Activated CD8-positive, alpha-beta T cell treated with anti-CD3 and anti-CD28 coated beads, Interleukin-2, amount 10 ng/mL, durations not matched to agents 7 days and 5 days (primary cell): ENCODE measurements at regions of chr1 and their contacts with region 1.

Region 1: DNA sequence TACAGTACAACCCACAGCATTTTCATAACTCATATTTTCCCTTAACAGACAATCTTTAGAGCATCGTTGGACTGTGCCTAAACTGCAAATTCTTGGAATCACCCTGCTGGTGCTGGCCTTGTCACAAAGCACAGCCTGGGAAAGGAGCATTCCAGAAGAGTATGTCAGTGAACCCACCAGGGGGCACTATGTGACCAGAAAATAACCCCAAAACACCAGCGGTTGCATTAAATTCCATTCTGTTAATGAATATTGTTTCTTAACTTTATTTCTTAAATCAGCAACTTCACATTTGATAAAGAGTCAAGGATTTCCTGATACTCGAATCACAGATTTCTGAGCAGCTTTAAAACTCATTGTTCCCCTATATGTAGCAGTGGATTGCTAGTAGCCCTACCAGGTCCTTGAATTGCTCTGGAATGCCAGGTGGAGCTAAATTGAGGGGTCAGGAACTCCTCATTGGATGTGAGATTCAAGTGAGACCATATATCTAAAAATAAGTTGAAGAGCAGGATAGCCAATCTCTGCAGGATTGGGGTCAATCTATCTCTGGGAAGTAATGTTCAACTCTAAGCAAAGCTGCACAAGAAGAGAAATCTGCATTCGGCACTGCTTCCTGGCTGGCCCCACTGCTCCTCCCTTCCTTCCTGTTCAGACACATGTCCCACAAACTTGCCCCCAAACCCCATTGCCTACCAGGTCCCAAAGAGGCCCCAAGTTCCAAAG is 12.7 kb upstream of the RAB4A start:
- DNase-seq: peak; percentile 74
- ATAC-seq: peak; percentile 54
- H3K4me3 Mint-ChIP-seq: peak overlapping the region; percentile 56
- H3K27ac Mint-ChIP-seq: peak overlapping the region; percentile 73
- H3K4me1 Mint-ChIP-seq: peaks cover 35% of the 10 kb centered on the region
- H3K27me3 Mint-ChIP-seq: peaks cover 2% of the 10 kb centered on the region

Region 2: DNA sequence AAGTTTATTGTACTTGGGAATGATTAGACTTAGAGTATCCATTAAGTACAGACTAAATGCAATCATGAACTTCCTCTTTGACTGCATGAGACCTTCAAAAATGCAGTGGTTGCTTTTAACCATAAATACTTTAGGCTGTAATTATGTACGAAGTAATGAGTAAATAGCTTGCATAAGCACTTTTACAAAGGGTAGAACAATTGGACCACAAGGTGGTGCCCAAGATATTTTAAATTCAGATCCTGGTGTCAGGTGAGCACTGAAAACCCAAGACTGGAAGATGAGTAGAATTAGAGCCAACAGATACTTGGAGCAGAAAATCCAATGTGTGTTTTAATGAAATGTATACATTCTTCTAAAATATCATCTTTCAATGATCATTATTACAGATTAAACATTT is 566.3 kb before region 1 on chr1:
- CTCF ChIA-PET with region 1: interaction called, 13 read pairs
- POLR2A ChIA-PET with region 1: no interaction called
- DNase-seq: peak; percentile 51
- ATAC-seq: no peak
- H3K4me3 Mint-ChIP-seq: no peak overlapping the region
- H3K27ac Mint-ChIP-seq: no peak overlapping the region
- H3K4me1 Mint-ChIP-seq: peaks cover 10% of the 10 kb centered on the region
- H3K27me3 Mint-ChIP-seq: peaks cover 30% of the 10 kb centered on the region

Region 3: GRCh38 chr1:229227298-229227919 is 30.8 kb before region 1 on chr1:
- CTCF ChIA-PET with region 1: interaction called, 81 read pairs
- POLR2A ChIA-PET with region 1: interaction called, 3 read pairs
- DNase-seq: peak; percentile 86
- ATAC-seq: peak; percentile 80
- H3K4me3 Mint-ChIP-seq: no peak overlapping the region
- H3K27ac Mint-ChIP-seq: no peak overlapping the region
- H3K4me1 Mint-ChIP-seq: peaks cover 10% of the 10 kb centered on the region
- H3K27me3 Mint-ChIP-seq: peaks cover 10% of the 10 kb centered on the region

Region 4: GRCh38 chr1:229452956-229453801 is 195.0 kb after region 1 on chr1:
- CTCF ChIA-PET with region 1: interaction called, 12 read pairs
- POLR2A ChIA-PET with region 1: no interaction called
- DNase-seq: no peak
- ATAC-seq: no peak
- H3K4me3 Mint-ChIP-seq: no peak overlapping the region
- H3K27ac Mint-ChIP-seq: no peak overlapping the region
- H3K4me1 Mint-ChIP-seq: peaks cover 7% of the 10 kb centered on the region
- H3K27me3 Mint-ChIP-seq: no peaks in the 10 kb centered on the region

Region 5: DNA sequence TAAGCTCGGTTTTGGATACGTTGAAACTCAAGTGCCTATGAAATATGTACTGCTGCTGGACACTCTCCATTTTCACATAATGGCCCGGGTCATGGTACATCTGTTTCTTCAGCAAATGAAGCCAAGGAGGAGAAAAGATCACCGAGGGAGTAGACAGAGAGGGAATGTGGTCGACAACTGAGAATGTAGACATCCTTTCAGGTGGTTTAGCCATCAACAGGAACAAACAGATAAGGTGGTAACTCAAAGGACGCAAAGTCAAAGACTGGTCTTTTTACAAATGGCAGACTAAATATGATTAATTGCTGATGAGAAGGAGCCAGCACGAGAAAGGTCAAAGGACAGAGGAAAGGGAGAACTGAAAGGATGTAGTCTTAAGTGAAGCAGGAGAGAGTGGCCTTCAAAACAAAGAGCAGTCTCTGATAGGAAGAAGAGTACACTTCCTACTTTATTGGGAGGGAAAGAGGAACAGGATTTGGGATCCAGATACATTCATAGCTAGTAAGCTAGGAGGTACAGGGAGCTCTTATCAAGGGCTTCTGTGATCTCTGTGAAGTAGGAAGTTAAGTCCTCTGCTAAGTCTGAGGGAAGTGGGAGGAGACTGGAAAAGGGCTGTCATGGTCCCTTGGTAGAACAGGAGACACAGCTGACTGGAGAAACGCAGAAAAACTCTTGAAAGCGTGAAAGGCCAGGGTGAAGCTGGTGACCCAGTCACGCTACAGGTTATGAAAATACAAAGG is 221.6 kb after region 1 on chr1:
- CTCF ChIA-PET with region 1: interaction called, 164 read pairs
- POLR2A ChIA-PET with region 1: no interaction called
- DNase-seq: no peak
- ATAC-seq: no peak
- H3K4me3 Mint-ChIP-seq: no peak overlapping the region
- H3K27ac Mint-ChIP-seq: peak overlapping the region; percentile 4
- H3K4me1 Mint-ChIP-seq: peaks cover 9% of the 10 kb centered on the region
- H3K27me3 Mint-ChIP-seq: no peaks in the 10 kb centered on the region

Region 6: GRCh38 chr1:229514578-229515275 is 256.5 kb after region 1 on chr1:
- CTCF ChIA-PET with region 1: interaction called, 32 read pairs
- POLR2A ChIA-PET with region 1: no interaction called
- DNase-seq: peak; percentile 70
- ATAC-seq: peak; percentile 85
- H3K4me3 Mint-ChIP-seq: no peak overlapping the region
- H3K27ac Mint-ChIP-seq: no peak overlapping the region
- H3K4me1 Mint-ChIP-seq: peaks cover 12% of the 10 kb centered on the region
- H3K27me3 Mint-ChIP-seq: no peaks in the 10 kb centered on the region